ENCODE measurements at regions of chr2 and their contacts with region 1.

Region 1: GRCh38 chr2:239326831-239327535 is 73.8 kb downstream of the HDAC4 start:
- DNase-seq: peak; percentile 68
- H3K4me3 ChIP-seq: no peak overlapping the region
- H3K27ac ChIP-seq: peak overlapping the region; percentile 92 to 97 (median 96)
- H3K4me1 ChIP-seq: peaks cover 0 to 100% (median 91%) of the 10 kb centered on the region in 4 donors
- H3K27me3 ChIP-seq: no peaks in the 10 kb centered on the region
- CTCF ChIP-seq: no peak
- EP300 ChIP-seq: no peak
- POLR2A ChIP-seq: no peak

Region 2: GRCh38 chr2:239348563-239349447 is 21.8 kb after region 1 on chr2:
- intact Hi-C with region 1: loop called (anchors 1 kb)
- DNase-seq: peak; percentile 95
- H3K4me3 ChIP-seq: peak overlapping the region; percentile 31 to 55 (median 40)
- H3K27ac ChIP-seq: peak overlapping the region; percentile 81 to 97 (median 96)
- H3K4me1 ChIP-seq: peaks cover 0 to 72% (median 60%) of the 10 kb centered on the region in 4 donors
- H3K27me3 ChIP-seq: no peaks in the 10 kb centered on the region
- CTCF ChIP-seq: no peak
- EP300 ChIP-seq: peak; percentile 97 to 100 (median 99)
- POLR2A ChIP-seq: peak; percentile 49 to 50

Region 3: DNA sequence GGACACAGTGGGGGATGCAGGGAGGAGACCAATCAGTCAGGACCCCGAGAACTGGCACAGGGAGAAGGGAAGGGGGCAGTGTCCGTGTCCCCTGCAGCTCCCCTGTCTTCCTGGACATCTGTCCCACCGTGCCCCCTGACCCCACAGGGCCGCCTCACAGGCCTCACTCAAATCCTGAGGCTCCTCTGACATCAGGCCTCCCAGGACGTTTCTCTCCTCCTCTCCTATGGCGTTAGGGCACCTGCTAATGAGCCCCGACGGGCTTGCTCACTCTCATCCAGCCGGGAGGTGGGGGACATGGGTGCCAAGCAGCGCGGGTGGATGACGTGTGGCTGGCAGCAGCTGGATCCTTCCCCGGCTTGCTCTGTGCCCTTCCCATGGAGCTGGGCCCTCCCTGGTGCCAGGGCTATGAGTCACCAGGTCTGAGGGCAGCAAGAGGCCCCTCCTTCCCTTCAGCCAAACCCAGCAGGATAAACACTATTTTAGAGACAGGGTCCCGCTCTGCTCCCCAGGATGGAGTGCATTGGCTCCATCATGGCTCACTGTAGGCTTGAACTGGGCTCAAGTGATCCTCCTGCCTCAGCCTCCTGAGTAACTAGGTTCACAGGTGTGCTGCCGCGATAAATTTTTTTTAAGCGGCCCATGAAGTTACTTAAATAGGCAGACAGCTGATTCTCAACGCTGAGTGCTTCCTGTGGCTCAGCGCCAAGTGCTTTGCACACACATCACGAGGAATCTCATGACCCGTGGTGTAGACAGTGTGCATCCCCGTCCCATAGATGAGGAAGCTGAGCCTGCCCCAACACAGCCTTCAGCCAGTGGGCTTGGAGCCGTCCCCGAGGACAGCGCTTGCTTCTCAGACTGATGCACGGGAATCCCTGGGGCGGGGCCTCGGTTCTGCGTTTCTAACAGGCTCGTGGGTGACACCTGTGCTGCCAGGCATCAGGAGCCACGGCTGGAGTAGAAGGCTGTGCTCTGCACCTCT is 138.3 kb after region 1 on chr2:
- intact Hi-C with region 1: no loop called
- DNase-seq: peak; percentile 90
- H3K4me3 ChIP-seq: no peak overlapping the region
- H3K27ac ChIP-seq: peak overlapping the region in 3 of 4 donors; percentile 26 to 55 (median 55)
- H3K4me1 ChIP-seq: peaks cover 0 to 23% (median 16%) of the 10 kb centered on the region in 4 donors
- H3K27me3 ChIP-seq: no peaks in the 10 kb centered on the region
- CTCF ChIP-seq: no peak
- EP300 ChIP-seq: peak in 1 of 4 donors; percentile 25
- POLR2A ChIP-seq: no peak

Measured in sigmoid colon (tissue), 7 donors.